Mammary epithelial cell (primary cell): ENCODE measurements at regions of chr14 and their contacts with region 1.

Region 1: DNA sequence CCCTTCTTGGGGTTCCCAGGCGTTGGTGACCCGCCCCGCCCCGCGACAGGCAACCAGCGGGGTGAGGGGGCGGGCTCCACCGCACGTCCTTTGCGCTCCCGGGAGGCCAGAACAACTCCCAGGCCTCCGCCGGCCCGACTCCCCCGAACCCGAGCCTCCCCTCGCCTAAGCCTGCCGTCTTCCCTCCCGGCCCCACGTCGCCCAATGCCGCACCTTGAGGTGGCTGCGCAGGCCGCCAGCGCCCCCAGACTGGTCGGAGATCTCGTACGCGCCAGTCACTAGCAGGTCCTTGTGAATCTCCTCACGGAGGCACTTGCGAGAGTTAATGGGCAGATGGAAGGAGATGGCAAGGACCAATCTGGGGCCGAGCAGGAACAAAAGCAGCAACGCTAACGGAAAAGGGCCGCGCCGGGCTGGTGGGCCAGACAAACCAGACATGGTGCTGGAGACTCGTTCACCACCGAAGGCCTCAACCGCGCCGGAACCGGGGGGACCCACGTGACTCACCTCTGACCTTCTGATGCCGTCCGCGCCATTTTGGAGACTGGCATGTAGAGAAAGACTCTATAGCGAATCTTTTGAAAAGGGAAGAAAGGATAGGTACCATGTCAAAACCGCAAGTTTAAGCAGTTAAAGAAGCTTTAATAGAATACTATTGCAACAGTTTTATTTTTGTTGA is at the start of gene TMED10:
- DNase-seq: peak; percentile 84
- H3K4me3 ChIP-seq: peak within 1 kb of the TSS; percentile 60 to 87 (median 80)
- H3K27ac ChIP-seq: peak within 1 kb of the TSS; percentile 98
- H3K4me1 ChIP-seq: peaks cover 13% of the 10 kb centered on the region
- H3K27me3 ChIP-seq: no peaks in the 10 kb centered on the region
- CTCF ChIP-seq: no peak
- total RNA-seq, gene TMED10: 389 to 397 TPM

Region 2: GRCh38 chr14:74852927-74853514 is 323.3 kb before region 1 on chr14:
- CTCF ChIA-PET with region 1: no interaction called
- dilution Hi-C with region 1: no loop called
- in situ Hi-C with region 1: no loop called
- intact Hi-C with region 1: no loop called
- DNase-seq: no peak
- H3K4me3 ChIP-seq: no peak overlapping the region
- H3K27ac ChIP-seq: no peak overlapping the region
- H3K4me1 ChIP-seq: peaks cover 28% of the 10 kb centered on the region
- H3K27me3 ChIP-seq: no peaks in the 10 kb centered on the region
- CTCF ChIP-seq: no peak

Region 3: DNA sequence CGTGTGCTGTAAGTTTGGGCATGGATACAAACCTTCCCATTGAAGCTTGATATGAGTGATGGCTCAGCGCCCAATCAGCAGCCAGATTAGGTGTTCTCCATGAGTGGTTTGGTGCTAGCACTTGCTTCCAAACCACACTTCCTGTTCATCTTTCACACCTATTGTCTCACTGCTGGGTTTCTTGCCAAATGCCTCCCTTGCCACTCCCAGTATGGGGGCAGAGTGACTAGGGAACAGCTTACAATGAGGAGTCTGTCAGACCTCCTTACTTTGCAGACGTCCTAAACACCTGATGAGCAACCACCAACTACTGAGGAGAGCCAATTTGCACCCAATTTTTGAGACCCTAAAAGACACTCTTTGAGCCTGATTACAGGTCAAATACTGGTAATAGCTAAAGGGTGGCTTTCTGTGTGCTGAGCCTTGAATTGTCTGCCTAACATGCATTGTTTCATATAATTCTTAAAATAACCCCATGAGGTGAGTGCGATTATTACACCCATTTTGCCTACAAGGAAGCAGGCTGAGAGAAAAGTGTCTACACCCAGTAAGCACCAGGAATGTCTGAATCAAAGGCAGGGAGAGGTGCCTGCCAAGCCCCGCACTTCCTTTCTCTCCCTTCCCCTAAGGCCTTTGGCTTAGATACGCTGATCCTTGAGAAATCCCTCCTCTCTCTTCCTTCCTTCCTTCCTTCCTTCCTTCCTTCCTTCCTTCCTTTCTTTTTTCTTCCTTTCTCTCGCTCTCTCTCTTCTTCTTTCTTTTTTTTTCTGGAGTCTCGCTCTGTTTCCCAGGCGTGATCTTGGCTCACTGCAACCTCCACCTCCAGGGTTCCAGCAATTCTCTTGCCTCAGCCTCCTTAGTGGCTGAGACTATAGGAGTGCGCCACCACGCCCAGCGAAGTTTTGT is 54.1 kb after region 1 on chr14:
- CTCF ChIA-PET with region 1: no interaction called
- dilution Hi-C with region 1: no loop called
- in situ Hi-C with region 1: no loop called
- intact Hi-C with region 1: loop called (anchors 2 kb)
- DNase-seq: peak; percentile 92
- H3K4me3 ChIP-seq: no peak overlapping the region
- H3K27ac ChIP-seq: peak overlapping the region; percentile 92
- H3K4me1 ChIP-seq: peaks cover 32% of the 10 kb centered on the region
- H3K27me3 ChIP-seq: no peaks in the 10 kb centered on the region
- CTCF ChIP-seq: peak; percentile 34 to 38

Region 4: DNA sequence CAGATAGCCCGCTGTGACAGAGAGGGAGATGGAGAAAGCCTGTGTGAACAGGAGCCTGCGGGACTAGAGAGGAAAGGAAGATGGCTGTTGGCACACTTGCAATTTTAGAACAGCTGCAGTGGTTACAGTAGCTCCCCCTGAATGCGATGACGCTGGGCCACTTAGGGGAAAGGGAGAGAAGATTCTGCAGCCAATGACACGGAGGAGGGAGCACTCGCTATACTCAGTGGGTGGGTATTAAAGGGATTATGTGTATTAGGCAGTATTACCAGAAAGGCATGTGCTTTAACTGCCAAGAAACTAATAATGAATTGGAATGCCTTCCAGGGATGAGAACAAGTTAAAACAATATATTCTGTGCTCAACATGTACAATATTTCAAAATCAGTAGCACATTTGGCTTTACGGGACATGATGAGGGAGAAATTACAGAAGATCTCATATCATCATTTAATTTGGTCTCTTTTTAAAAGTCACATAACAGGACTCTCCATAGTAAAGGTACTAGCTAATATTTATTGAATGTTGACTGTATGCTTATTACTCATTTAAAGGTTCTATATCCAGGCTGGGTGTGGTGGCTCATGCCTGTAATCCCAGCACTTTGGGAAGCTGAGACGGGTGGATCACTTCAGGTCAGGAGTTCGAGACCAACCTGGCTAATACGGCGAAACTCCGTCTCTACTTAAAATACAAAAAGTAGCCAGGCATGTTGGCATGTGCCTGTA is 66.4 kb after region 1 on chr14:
- CTCF ChIA-PET with region 1: no interaction called
- dilution Hi-C with region 1: no loop called
- in situ Hi-C with region 1: no loop called
- intact Hi-C with region 1: loop called (anchors 2 kb)
- DNase-seq: peak; percentile 84
- H3K4me3 ChIP-seq: no peak overlapping the region
- H3K27ac ChIP-seq: peak overlapping the region; percentile 73
- H3K4me1 ChIP-seq: peaks cover 10% of the 10 kb centered on the region
- H3K27me3 ChIP-seq: no peaks in the 10 kb centered on the region
- CTCF ChIP-seq: no peak

Region 5: DNA sequence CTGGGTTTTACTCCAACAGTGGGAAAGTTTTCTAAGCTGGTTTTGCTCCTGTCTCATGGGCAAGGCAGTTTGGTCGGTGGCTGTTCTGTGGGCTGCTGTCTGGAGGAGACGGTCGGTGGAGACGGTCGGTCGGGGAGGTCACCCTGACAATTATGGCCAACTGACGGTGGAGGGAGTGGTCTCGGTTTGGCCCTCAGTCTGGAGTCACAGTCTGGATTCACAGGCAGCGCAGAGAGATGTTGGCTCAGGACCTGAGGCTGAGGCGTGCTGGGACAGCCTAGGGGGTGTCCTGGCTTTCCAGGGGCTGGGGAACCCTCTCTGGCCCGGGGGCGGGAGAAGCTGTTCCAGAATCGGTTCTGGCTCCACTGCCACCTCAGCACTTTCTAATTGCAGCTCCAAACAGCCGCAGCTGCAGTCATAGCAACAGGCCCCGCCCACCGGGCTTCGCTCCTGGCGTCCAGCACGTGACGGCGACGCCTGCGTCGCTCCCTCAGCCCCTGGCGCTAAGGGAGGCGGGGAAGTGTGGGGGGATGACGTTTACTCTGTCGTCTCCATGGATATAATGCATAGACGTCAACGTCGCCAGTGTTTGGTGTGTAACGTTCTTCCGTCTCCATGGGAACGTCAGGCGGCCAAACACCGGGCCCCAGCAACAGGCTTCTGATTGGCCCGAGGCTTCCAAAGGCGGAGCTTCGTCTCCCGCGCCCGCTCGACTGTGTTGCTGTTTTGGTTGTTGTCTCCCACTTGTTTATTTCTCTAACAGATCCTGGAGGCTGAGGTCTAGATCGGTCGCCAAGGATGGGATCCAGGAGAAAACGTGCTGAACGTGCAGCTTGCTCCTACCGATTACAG is 82.6 kb after region 1 on chr14:
- CTCF ChIA-PET with region 1: no interaction called
- dilution Hi-C with region 1: no loop called
- in situ Hi-C with region 1: no loop called
- intact Hi-C with region 1: loop called (anchors 1 kb)
- DNase-seq: peak; percentile 100
- H3K4me3 ChIP-seq: peak overlapping the region; percentile 0 to 37 (median 27)
- H3K27ac ChIP-seq: peak overlapping the region; percentile 97
- H3K4me1 ChIP-seq: peaks cover 52% of the 10 kb centered on the region
- H3K27me3 ChIP-seq: no peaks in the 10 kb centered on the region
- CTCF ChIP-seq: no peak

Region 6: DNA sequence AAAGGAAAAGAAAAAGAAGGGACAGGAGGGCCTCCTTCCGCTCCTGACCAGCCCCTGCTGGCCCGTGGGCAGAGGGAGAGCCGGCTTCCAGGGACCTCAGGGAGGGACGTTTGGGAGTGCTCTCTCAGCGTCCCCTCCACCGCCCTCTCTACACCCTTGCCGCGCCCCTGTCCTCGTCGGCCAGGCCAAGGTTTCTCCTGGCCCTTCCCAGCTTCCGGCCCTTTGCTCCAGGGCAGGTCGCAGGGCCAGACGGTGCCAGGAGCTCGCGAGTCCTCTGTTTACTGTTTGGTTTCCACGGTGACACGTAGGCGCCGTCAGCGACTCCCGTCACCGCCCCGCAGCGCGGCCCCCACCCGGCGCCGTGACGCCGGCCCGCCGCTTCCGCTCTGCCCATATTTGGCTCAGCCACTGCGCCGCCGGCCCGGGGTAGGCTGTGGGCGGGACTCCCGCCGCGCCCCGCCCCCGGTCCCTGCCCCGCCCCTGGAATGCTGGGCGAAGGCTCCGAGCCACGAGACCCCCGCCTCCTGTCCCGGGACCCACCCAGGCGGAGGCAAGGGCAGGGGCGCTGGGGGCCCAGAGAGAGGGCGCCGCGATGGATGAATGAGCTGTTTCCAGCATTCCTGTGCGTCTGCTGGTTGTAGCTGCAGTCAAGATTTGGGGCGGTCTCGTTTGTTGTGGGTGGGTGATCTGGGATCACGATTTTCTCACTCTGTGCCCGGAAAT is 117.8 kb after region 1 on chr14:
- CTCF ChIA-PET with region 1: no interaction called
- dilution Hi-C with region 1: no loop called
- in situ Hi-C with region 1: no loop called
- intact Hi-C with region 1: loop called (anchors 1 kb)
- DNase-seq: peak; percentile 95
- H3K4me3 ChIP-seq: peak overlapping the region; percentile 73 to 86 (median 80)
- H3K27ac ChIP-seq: peak overlapping the region; percentile 99
- H3K4me1 ChIP-seq: peaks cover 32% of the 10 kb centered on the region
- H3K27me3 ChIP-seq: no peaks in the 10 kb centered on the region
- CTCF ChIP-seq: peak in 1 of 2 donors; percentile 3